ENCODE measurements at regions of chr15 and their contacts with region 1.

Region 1: GRCh38 chr15:74482661-74483060 is 21.7 kb upstream of the UBL7 start:
- DNase-seq: no peak
- H3K4me3 ChIP-seq: no peak overlapping the region
- H3K27ac ChIP-seq: no peak overlapping the region
- H3K4me1 ChIP-seq: no peaks in the 10 kb centered on the region
- H3K27me3 ChIP-seq: no peaks in the 10 kb centered on the region
- CTCF ChIP-seq: no peak

Region 2: DNA sequence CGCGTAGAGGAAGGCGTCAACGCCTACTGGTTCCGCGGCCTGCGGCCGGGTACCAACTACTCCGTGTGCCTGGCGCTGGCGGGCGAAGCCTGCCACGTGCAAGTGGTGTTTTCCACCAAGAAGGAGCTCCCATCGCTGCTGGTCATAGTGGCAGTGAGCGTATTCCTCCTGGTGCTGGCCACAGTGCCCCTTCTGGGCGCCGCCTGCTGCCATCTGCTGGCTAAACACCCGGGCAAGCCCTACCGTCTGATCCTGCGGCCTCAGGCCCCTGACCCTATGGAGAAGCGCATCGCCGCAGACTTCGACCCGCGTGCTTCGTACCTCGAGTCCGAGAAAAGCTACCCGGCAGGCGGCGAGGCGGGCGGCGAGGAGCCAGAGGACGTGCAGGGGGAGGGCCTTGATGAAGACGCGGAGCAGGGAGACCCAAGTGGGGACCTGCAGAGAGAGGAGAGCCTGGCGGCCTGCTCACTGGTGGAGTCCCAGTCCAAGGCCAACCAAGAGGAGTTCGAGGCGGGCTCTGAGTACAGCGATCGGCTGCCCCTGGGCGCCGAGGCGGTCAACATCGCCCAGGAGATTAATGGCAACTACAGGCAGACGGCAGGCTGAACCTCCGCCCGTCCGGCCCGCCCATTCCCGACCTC is 348.2 kb before region 1 on chr15:
- CTCF ChIA-PET with region 1: no interaction called
- POLR2A ChIA-PET with region 1: no interaction called
- intact Hi-C with region 1: no loop called
- DNase-seq: no peak
- H3K4me3 ChIP-seq: no peak overlapping the region
- H3K27ac ChIP-seq: no peak overlapping the region
- H3K4me1 ChIP-seq: peaks cover 12% of the 10 kb centered on the region
- H3K27me3 ChIP-seq: peaks cover 4% of the 10 kb centered on the region
- CTCF ChIP-seq: 0 out of 2 replicates have a peak, but pooled peaks have one; percentile 30

Region 3: GRCh38 chr15:74340139-74340538 is 142.5 kb before region 1 on chr15:
- CTCF ChIA-PET with region 1: no interaction called
- POLR2A ChIA-PET with region 1: no interaction called
- intact Hi-C with region 1: no loop called
- DNase-seq: peak; percentile 82 to 98
- H3K4me3 ChIP-seq: no peak overlapping the region; the same call in 1 of the 2 replicates
- H3K27ac ChIP-seq: peak overlapping the region; percentile 85
- H3K4me1 ChIP-seq: peaks cover 60% of the 10 kb centered on the region
- H3K27me3 ChIP-seq: no peaks in the 10 kb centered on the region
- CTCF ChIP-seq: no peak

Region 4: DNA sequence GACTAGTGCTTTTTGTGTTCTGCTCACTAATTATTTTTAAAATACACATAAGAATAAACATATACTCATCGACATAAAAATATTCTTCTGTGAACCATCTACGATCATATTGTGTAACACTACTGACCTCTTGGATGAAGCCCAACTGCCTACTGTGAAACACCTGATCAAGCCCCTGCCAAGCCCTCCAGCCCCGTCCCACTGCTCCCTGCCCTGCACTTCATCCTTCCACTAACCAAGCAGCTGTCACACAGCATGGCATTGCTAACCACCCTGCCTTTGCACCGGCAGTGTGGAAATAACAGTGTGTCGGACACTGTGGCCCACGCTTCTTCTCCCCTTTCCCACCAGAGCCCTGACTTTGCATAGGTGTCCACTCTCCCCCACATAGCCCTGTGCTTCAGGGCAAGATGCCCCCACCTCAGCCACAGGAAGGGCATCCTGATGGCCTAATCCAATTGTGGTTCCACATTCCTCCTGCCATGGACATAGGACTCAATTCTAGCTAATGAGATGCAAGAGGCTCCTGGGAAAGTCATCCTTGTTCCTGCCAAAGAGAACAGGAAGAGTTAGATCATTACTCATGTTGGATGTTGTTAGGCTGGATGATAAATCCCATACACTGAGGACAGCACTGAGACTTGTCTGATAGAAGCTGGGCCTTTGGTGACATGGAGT is 23.3 kb after region 1 on chr15:
- CTCF ChIA-PET with region 1: interaction called, 10 read pairs
- POLR2A ChIA-PET with region 1: no interaction called
- intact Hi-C with region 1: no loop called
- DNase-seq: no peak
- H3K4me3 ChIP-seq: no peak overlapping the region
- H3K27ac ChIP-seq: no peak overlapping the region
- H3K4me1 ChIP-seq: no peaks in the 10 kb centered on the region
- H3K27me3 ChIP-seq: no peaks in the 10 kb centered on the region
- CTCF ChIP-seq: no peak

Region 5: DNA sequence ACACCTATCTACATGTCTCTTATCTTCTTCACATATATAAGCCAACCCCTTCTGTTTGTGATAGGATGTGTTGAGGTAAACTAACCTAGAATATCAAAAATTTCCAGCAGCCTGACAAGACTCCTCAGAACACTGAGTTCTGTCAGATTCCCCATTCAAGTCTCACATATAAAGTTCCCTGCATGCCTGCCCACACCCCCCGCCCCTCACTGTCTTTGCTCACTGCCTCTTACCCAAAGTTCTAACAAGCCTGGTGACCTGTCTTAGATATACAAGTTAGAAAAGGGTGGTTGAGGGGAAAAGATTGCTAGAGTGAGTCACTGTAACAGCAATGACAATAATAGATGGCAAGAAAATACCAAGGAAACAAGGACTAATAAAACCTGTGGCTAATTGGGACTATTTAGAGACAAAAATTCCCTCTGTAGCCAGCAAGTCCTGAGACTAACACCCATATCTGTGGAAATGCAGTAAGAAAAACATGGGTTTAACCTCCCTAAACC is 1461.1 kb after region 1 on chr15:
- CTCF ChIA-PET with region 1: no interaction called
- POLR2A ChIA-PET with region 1: no interaction called
- intact Hi-C with region 1: no loop called
- DNase-seq: no peak
- H3K4me3 ChIP-seq: no peak overlapping the region
- H3K27ac ChIP-seq: no peak overlapping the region
- H3K4me1 ChIP-seq: no peaks in the 10 kb centered on the region
- H3K27me3 ChIP-seq: no peaks in the 10 kb centered on the region
- CTCF ChIP-seq: no peak